Activated naive CD4-positive, alpha-beta T cell treated with anti-CD3 and anti-CD28 coated beads for 36 hours (primary cell): ENCODE measurements at regions of chr21 and their contacts with region 1.

Region 1: GRCh38 chr21:29372063-29372802 is 73.5 kb downstream of the BACH1 start:
- DNase-seq: peak; percentile 67
- H3K4me3 Mint-ChIP-seq: no peak overlapping the region
- H3K27ac Mint-ChIP-seq: peak overlapping the region; percentile 60
- H3K4me1 Mint-ChIP-seq: peaks cover 25% of the 10 kb centered on the region
- H3K27me3 Mint-ChIP-seq: no peaks in the 10 kb centered on the region

Region 2: GRCh38 chr21:28884976-28885852 is 487.0 kb before region 1 on chr21:
- CTCF ChIA-PET with region 1: no interaction called
- intact Hi-C with region 1: loop called (anchors 5 kb)
- DNase-seq: peak; percentile 92
- H3K4me3 Mint-ChIP-seq: peak overlapping the region; percentile 90
- H3K27ac Mint-ChIP-seq: peak overlapping the region; percentile 97
- H3K4me1 Mint-ChIP-seq: peaks cover 7% of the 10 kb centered on the region
- H3K27me3 Mint-ChIP-seq: no peaks in the 10 kb centered on the region

Region 3: GRCh38 chr21:29078869-29079767 is 293.1 kb before region 1 on chr21:
- CTCF ChIA-PET with region 1: interaction called, 15 read pairs
- intact Hi-C with region 1: no loop called
- DNase-seq: peak; percentile 48
- H3K4me3 Mint-ChIP-seq: peak overlapping the region; percentile 81
- H3K27ac Mint-ChIP-seq: peak overlapping the region; percentile 96
- H3K4me1 Mint-ChIP-seq: peaks cover 54% of the 10 kb centered on the region
- H3K27me3 Mint-ChIP-seq: no peaks in the 10 kb centered on the region

Region 4: GRCh38 chr21:29091032-29091431 is 281.2 kb before region 1 on chr21:
- CTCF ChIA-PET with region 1: interaction called, 22 read pairs
- intact Hi-C with region 1: loop called (anchors 1 kb)
- DNase-seq: no peak
- H3K4me3 Mint-ChIP-seq: no peak overlapping the region
- H3K27ac Mint-ChIP-seq: no peak overlapping the region
- H3K4me1 Mint-ChIP-seq: peaks cover 5% of the 10 kb centered on the region
- H3K27me3 Mint-ChIP-seq: no peaks in the 10 kb centered on the region

Region 5: GRCh38 chr21:29219165-29219770 is 153.0 kb before region 1 on chr21:
- CTCF ChIA-PET with region 1: no interaction called
- intact Hi-C with region 1: no loop called
- DNase-seq: no peak
- H3K4me3 Mint-ChIP-seq: no peak overlapping the region
- H3K27ac Mint-ChIP-seq: no peak overlapping the region
- H3K4me1 Mint-ChIP-seq: peaks cover 4% of the 10 kb centered on the region
- H3K27me3 Mint-ChIP-seq: no peaks in the 10 kb centered on the region

Region 6: GRCh38 chr21:29343519-29343918 is 28.7 kb before region 1 on chr21:
- CTCF ChIA-PET with region 1: interaction called, 6 read pairs
- intact Hi-C with region 1: loop called (anchors 1 kb)
- DNase-seq: no peak
- H3K4me3 Mint-ChIP-seq: no peak overlapping the region
- H3K27ac Mint-ChIP-seq: no peak overlapping the region
- H3K4me1 Mint-ChIP-seq: peaks cover 39% of the 10 kb centered on the region
- H3K27me3 Mint-ChIP-seq: no peaks in the 10 kb centered on the region

Region 7: GRCh38 chr21:29360799-29361765 is 11.2 kb before region 1 on chr21:
- CTCF ChIA-PET with region 1: interaction called, 34 read pairs
- intact Hi-C with region 1: no loop called
- DNase-seq: peak; percentile 36
- H3K4me3 Mint-ChIP-seq: no peak overlapping the region
- H3K27ac Mint-ChIP-seq: no peak overlapping the region
- H3K4me1 Mint-ChIP-seq: peaks cover 10% of the 10 kb centered on the region
- H3K27me3 Mint-ChIP-seq: no peaks in the 10 kb centered on the region

Region 8: GRCh38 chr21:29443411-29444010 is 71.3 kb after region 1 on chr21:
- CTCF ChIA-PET with region 1: no interaction called
- intact Hi-C with region 1: no loop called
- DNase-seq: peak; percentile 19
- H3K4me3 Mint-ChIP-seq: no peak overlapping the region
- H3K27ac Mint-ChIP-seq: no peak overlapping the region
- H3K4me1 Mint-ChIP-seq: peaks cover 17% of the 10 kb centered on the region
- H3K27me3 Mint-ChIP-seq: no peaks in the 10 kb centered on the region